CD8-positive, alpha-beta T cell (primary cell): ENCODE measurements at regions of chr3 and their contacts with region 1.

Region 1: DNA sequence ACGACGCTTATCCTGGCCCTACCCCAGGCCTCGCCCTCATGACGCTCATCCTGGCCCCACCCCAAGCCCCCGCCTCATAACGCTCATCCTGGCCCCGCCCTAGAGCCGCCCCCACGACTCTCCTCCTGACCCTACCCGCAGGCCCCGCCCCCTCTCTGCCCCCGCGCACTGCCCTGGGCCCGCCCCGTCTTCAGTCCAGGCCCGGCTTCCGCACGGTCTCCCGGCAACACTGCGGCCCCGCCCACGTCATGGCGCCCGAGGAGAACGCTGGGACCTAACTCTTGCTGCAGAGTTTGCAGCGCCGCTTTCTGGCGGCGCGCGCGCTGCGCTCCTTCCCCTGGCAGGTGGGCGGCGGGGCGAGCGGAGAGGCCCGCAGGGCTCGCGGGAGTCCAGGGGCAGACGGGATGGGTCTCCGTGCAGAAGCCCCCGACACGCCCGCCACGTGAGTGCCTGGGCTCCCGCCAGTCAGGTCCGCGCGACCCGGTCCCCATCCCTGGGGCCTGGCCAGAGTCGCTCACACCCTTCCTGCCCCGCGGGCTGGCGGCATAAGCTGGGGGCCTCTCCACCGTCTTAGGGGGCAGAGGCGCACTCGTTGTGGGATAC is 52.5 kb upstream of the ROPN1B start:
- DNase-seq: peak; percentile 89 to 98 (median 94)
- ATAC-seq: peak; percentile 94
- H3K4me3 ChIP-seq: peak overlapping the region; percentile 61 to 81
- H3K4me3 Mint-ChIP-seq: peak overlapping the region; percentile 90
- H3K27ac ChIP-seq: peak overlapping the region; percentile 74 to 84
- H3K27ac Mint-ChIP-seq: peak overlapping the region; percentile 96
- H3K4me1 ChIP-seq: peaks cover 6% of the 10 kb centered on the region
- H3K4me1 Mint-ChIP-seq: peaks cover 19% of the 10 kb centered on the region
- H3K27me3 ChIP-seq: no peaks in the 10 kb centered on the region
- H3K27me3 Mint-ChIP-seq: no peaks in the 10 kb centered on the region
- CTCF ChIP-seq: peak; percentile 18

Region 2: DNA sequence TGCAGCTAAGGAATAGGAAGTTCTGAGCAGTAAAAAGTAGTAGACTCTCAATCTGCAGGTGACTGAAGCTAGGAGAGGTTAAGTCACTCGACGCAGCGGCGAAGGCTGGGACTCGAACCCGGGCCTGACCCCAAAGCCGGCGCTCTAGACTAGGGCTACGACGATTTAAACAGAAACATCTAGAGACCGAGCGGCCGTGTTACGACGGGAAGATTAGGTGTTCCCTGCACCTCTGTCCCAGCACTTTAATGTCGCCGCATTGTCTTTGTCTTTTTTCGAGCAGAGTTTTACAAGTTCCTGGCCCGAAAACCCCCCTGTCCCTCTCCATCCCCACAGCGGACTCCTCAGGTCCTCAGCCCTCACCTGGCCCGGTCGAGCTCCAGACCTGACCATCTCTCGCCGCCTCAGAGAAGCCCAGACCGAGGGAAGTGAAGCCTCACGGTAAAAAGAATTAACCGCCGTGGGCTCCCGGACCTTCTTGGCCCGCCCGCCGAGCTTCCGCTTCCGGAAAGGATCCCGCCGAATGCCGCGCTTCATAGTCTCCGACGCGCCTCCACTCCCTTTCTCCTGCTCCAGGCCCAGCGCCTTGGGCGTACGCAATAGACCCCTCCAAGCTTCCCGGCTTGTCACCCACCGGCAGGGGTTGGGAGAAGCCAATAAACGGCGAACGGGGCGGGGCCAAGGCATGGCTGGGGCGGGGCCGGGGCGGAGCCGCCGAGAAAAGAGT is 1955.5 kb before region 1 on chr3 and contains the start of gene CCDC14:
- CTCF ChIA-PET with region 1: no interaction called
- POLR2A ChIA-PET with region 1: no interaction called
- intact Hi-C with region 1: loop called in 1 of 2 experiments (anchors 5 kb)
- DNase-seq: peak; percentile 37 to 84 (median 73)
- ATAC-seq: peak; percentile 88
- H3K4me3 ChIP-seq: peak within 1 kb of the TSS; percentile 63
- H3K4me3 Mint-ChIP-seq: peak within 1 kb of the TSS; percentile 96
- H3K27ac ChIP-seq: peak within 1 kb of the TSS; percentile 52 to 59
- H3K27ac Mint-ChIP-seq: peak within 1 kb of the TSS; percentile 93
- H3K4me1 ChIP-seq: peaks cover 16% of the 10 kb centered on the region
- H3K4me1 Mint-ChIP-seq: peaks cover 30% of the 10 kb centered on the region
- H3K27me3 ChIP-seq: no peaks in the 10 kb centered on the region
- H3K27me3 Mint-ChIP-seq: peaks cover 5% of the 10 kb centered on the region
- CTCF ChIP-seq: no peak
- total RNA-seq, gene CCDC14: 21.9 to 23.8 TPM

Region 3: DNA sequence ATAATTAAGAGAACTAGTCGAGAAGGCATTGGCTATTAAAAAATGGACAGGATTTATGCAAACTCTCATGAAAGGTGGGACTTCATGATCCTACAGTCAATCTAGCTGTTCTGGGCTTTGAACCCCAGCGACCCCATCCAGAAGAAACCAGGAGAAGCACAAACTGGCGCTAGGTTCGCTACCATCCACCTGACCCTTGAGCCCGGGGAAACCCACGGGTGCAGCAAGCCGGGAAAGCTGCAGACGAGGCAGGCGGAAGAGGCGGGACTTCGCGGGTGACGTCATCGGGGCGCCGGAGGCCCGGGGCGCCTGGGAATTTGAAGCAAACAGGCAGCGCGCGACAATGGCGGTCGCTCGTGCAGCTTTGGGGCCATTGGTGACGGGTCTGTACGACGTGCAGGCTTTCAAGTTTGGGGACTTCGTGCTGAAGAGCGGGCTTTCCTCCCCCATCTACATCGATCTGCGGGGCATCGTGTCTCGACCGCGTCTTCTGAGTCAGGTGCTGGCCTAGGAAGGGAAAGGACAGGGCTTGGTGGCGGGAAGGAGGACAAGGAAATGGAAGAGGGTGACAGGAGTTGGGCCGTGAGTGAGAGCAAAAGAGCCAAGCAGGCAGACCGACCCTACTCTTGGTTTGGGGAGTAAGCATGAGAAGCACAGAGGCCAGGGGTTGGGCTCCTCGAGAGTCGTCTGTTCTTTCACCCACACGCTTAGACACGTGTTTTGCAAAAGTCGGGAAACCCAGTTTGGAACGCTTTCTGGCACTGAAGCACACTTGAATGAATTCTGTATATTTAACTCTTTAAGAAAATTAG is 1186.1 kb before region 1 on chr3 and contains the start of gene UMPS:
- CTCF ChIA-PET with region 1: no interaction called
- POLR2A ChIA-PET with region 1: no interaction called
- intact Hi-C with region 1: loop called in 1 of 2 experiments (anchors 5 kb)
- DNase-seq: peak; percentile 82 to 95 (median 93)
- ATAC-seq: peak; percentile 91
- H3K4me3 ChIP-seq: peak within 1 kb of the TSS; percentile 96 to 97
- H3K4me3 Mint-ChIP-seq: peak within 1 kb of the TSS; percentile 99
- H3K27ac ChIP-seq: peak within 1 kb of the TSS; percentile 82 to 93
- H3K27ac Mint-ChIP-seq: peak within 1 kb of the TSS; percentile 99
- H3K4me1 ChIP-seq: peaks cover 29% of the 10 kb centered on the region
- H3K4me1 Mint-ChIP-seq: peaks cover 39% of the 10 kb centered on the region
- H3K27me3 ChIP-seq: peaks cover 0 to 4% of the 10 kb centered on the region in 2 experiments
- H3K27me3 Mint-ChIP-seq: peaks cover 10% of the 10 kb centered on the region
- CTCF ChIP-seq: no peak
- total RNA-seq, gene UMPS: 16.7 to 19.8 TPM

Region 4: GRCh38 chr3:125594581-125595011 is 321.9 kb before region 1 on chr3:
- CTCF ChIA-PET with region 1: no interaction called
- POLR2A ChIA-PET with region 1: no interaction called
- intact Hi-C with region 1: loop called in 1 of 2 experiments (anchors 2 kb)
- DNase-seq: peak in 2 of 9 experiments; percentile 6 to 17
- ATAC-seq: no peak
- H3K4me3 ChIP-seq: peak overlapping the region; percentile 85 to 91
- H3K4me3 Mint-ChIP-seq: peak overlapping the region; percentile 92
- H3K27ac ChIP-seq: peak overlapping the region; percentile 68 to 87
- H3K27ac Mint-ChIP-seq: peak overlapping the region; percentile 77
- H3K4me1 ChIP-seq: peaks cover 16% of the 10 kb centered on the region
- H3K4me1 Mint-ChIP-seq: peaks cover 44% of the 10 kb centered on the region
- H3K27me3 ChIP-seq: no peaks in the 10 kb centered on the region
- H3K27me3 Mint-ChIP-seq: no peaks in the 10 kb centered on the region
- CTCF ChIP-seq: no peak

Region 5: DNA sequence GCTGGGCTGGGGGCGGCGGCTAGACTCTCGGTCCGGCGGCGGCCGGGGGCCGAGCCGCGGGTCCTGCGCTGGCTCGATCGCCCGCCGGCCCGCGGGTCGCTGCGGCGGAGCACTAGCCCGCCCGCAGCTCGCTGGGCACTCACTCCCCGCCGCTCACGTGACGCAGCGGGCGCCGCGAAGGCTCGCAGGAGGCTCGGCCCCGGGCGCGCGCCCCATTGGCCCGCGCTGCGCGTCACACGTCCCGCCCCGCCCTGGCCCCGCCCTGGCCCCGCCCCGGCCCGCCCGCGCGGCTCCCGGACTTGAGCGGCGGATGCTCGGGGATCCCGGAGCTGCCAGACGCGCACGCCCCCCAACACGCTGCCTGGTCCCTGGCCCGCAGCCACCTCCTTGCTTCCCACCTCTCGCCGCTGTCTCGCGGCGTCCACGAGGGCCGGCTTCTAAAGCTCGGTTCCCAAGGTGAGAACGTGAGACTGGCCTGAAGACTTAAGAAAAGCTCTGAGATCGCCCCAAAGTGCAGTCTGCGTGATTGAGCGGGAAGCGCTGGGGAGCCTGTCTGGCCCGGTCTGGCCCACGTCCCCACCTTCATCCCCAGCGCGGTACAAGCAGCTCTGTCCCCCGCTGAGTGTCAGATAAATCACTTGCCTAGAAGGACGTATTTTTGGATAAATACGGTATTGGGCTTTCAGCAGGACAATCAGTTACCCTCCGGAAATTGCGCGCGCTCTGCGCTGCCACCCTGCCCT is 441.0 kb after region 1 on chr3 and contains the start of gene KLF15:
- CTCF ChIA-PET with region 1: no interaction called
- POLR2A ChIA-PET with region 1: no interaction called
- intact Hi-C with region 1: loop called in 1 of 2 experiments (anchors 10 kb)
- DNase-seq: peak; percentile 46 to 85 (median 71)
- ATAC-seq: peak; percentile 94
- H3K4me3 ChIP-seq: peak within 1 kb of the TSS; percentile 50 to 79
- H3K4me3 Mint-ChIP-seq: peak within 1 kb of the TSS; percentile 90
- H3K27ac ChIP-seq: no peak within 1 kb of the TSS
- H3K27ac Mint-ChIP-seq: peak within 1 kb of the TSS; percentile 77
- H3K4me1 ChIP-seq: peaks cover 14% of the 10 kb centered on the region
- H3K4me1 Mint-ChIP-seq: peaks cover 15% of the 10 kb centered on the region
- H3K27me3 ChIP-seq: peaks cover 13 to 19% of the 10 kb centered on the region in 2 experiments
- H3K27me3 Mint-ChIP-seq: peaks cover 52% of the 10 kb centered on the region
- CTCF ChIP-seq: no peak
- total RNA-seq, gene KLF15: 0.16 TPM in 1 of 2 experiments, not detected in the other

Region 6: DNA sequence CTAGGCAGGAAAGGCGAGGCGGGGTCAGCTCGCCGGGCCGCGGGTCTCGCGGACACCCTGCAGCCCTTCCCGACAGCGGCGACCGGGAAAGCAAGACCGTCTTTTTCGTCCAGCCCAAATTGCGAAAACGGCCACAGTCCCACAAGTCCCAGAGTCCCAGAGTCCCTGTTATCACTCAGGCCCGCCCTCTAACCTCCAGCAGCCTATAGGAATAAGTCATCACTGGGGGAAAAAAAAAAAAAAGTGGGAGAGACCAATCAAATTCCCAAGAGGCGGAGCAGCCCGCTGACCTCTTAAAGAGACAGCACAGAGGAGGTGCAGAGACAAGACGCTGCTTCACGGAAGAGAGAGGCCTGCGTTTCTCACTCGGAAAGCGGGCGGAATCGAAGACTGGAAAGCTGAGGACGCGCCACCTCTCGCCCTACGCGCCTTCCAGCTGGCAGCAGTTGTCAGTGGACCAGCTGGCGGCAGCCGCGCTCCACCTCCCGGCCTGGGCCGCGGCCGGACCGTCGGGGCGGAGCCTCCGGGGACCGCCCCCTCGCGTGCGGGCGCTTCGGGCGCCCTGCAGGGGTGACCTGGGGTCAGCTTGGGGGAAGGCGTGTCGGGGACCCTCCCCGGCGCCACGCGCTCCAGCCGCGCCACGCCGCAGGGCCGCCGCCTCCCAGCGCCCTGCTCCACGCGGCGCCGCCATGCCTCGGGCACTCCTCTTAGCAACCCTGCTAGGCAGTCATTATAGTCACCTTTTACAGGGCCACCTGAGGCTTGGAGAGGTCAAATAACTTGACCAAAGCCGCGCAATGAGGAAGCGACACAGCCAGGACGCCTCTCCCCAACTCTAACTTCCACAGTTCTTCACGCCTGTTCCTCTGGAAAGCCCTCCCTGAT is 1674.4 kb after region 1 on chr3 and contains the start of gene TPRA1:
- CTCF ChIA-PET with region 1: no interaction called
- POLR2A ChIA-PET with region 1: no interaction called
- intact Hi-C with region 1: loop called in 1 of 2 experiments (anchors 10 kb)
- DNase-seq: peak; percentile 46 to 94 (median 79)
- ATAC-seq: peak; percentile 86
- H3K4me3 ChIP-seq: peak within 1 kb of the TSS; percentile 75 to 81
- H3K4me3 Mint-ChIP-seq: peak within 1 kb of the TSS; percentile 97
- H3K27ac ChIP-seq: peak within 1 kb of the TSS; percentile 68 to 74
- H3K27ac Mint-ChIP-seq: peak within 1 kb of the TSS; percentile 91
- H3K4me1 ChIP-seq: peaks cover 20% of the 10 kb centered on the region
- H3K4me1 Mint-ChIP-seq: peaks cover 35% of the 10 kb centered on the region
- H3K27me3 ChIP-seq: no peaks in the 10 kb centered on the region
- H3K27me3 Mint-ChIP-seq: no peaks in the 10 kb centered on the region
- CTCF ChIP-seq: no peak
- total RNA-seq, gene TPRA1: 6.0 to 6.1 TPM